Activated CD4-positive, alpha-beta T cell treated with anti-CD3 and anti-CD28 coated beads for 36 hours (primary cell): ENCODE measurements at regions of chr15 and their contacts with region 1.

Region 1: GRCh38 chr15:91055548-91056331 is 33.3 kb upstream of the VPS33B start:
- DNase-seq: peak; percentile 61
- ATAC-seq: peak; percentile 42
- H3K4me3 Mint-ChIP-seq: no peak overlapping the region
- H3K27ac Mint-ChIP-seq: no peak overlapping the region
- H3K4me1 Mint-ChIP-seq: no peaks in the 10 kb centered on the region
- H3K27me3 Mint-ChIP-seq: peaks cover 44% of the 10 kb centered on the region

Region 2: GRCh38 chr15:91142114-91142731 is 86.5 kb after region 1 on chr15:
- CTCF ChIA-PET with region 1: no interaction called
- POLR2A ChIA-PET with region 1: no interaction called
- intact Hi-C with region 1: loop called in 1 of 2 experiments (anchors 2 kb)
- DNase-seq: no peak
- ATAC-seq: no peak
- H3K4me3 Mint-ChIP-seq: no peak overlapping the region
- H3K27ac Mint-ChIP-seq: no peak overlapping the region
- H3K4me1 Mint-ChIP-seq: no peaks in the 10 kb centered on the region
- H3K27me3 Mint-ChIP-seq: peaks cover 33% of the 10 kb centered on the region

Region 3: DNA sequence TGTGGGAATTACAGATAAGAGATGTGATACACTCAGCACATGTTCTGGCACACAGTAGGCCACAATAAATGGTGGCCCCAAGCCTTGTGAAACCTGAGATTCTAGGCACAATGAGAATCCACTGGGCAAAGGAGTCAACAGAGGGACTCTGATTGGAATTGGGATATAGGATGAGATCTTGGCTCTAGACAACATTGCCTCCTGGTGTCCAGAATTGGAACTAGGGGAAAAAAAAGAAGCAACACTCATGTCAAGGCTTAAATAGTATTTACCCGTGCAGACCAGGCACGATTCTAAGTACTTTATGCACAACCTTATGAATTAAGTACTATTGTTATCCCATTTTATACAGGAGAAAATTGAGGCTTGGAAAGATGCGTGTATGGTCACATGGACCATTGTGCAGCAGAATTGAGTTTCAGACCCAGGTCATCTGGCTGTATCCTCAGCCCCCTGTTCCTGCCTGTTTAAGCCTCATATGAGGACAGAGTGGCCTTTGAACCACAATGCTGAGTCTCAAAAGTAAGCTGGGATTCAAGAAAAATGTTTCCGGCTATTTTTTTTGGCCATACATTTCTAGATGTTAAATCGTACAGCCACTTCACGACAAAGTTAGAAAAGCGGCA is 169.1 kb after region 1 on chr15:
- CTCF ChIA-PET with region 1: interaction called, 35 read pairs
- POLR2A ChIA-PET with region 1: no interaction called
- intact Hi-C with region 1: loop called (anchors 1 kb)
- DNase-seq: no peak
- ATAC-seq: no peak
- H3K4me3 Mint-ChIP-seq: no peak overlapping the region
- H3K27ac Mint-ChIP-seq: no peak overlapping the region
- H3K4me1 Mint-ChIP-seq: no peaks in the 10 kb centered on the region
- H3K27me3 Mint-ChIP-seq: peaks cover 30% of the 10 kb centered on the region

Region 4: GRCh38 chr15:91249591-91249990 is 193.9 kb after region 1 on chr15:
- CTCF ChIA-PET with region 1: interaction called, 5 read pairs
- POLR2A ChIA-PET with region 1: no interaction called
- intact Hi-C with region 1: loop called in 1 of 2 experiments (anchors 1 kb)
- DNase-seq: no peak
- ATAC-seq: no peak
- H3K4me3 Mint-ChIP-seq: no peak overlapping the region
- H3K27ac Mint-ChIP-seq: no peak overlapping the region
- H3K4me1 Mint-ChIP-seq: no peaks in the 10 kb centered on the region
- H3K27me3 Mint-ChIP-seq: peaks cover 13% of the 10 kb centered on the region